ENCODE measurements at regions of chr12 and their contacts with region 1.

Region 1: DNA sequence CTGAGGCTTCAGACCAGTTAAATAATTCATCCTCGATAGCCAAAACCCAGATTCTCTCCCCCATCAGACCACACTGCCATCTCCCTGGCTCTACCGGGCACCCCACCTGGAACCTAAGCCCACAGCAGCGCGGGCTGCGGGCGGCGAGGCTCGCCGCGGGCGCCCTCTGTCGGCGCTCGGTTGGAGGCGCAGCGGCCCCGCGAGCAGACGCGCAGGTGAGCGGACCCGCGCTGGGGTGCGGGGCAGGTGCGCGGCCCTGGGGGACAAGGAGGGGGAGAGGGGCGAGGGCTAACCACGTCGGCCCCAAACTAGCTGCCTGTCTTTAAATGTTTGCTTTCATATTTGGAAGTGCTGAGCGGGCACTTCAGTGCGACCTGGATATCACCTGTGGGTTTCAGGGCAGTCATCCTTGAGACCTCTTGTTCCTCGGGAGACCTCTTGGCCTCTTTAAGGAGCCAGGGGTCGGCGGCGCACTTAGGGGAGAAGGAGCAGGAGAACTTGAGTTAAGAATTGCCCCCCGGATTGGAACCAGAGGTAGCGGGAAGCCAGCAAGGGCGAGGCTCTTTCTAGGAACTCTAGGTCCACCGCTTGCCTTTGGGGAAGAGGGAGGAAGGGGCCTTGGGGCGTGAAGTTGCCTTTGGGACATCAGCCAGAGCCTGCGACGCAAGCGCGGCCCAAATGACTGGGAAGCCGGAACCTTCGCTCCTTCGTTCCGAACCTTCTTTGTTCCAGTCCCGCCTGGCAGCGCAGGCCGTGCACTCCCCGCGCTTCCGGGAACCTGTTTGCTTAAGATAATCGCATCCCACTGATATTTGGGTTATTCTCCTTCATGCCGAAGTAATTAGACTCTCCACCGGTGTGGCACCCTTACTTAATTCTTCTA is 78.7 kb downstream of the NEDD1 start:
- DNase-seq: peak in 13 of 14 experiments; percentile 5 to 73 (median 36)
- ATAC-seq: peak; percentile 92
- H3K4me3 ChIP-seq: peak overlapping the region; percentile 60
- H3K4me3 Mint-ChIP-seq: peak overlapping the region; percentile 80
- H3K27ac ChIP-seq: no peak overlapping the region
- H3K27ac Mint-ChIP-seq: no peak overlapping the region
- H3K4me1 ChIP-seq: peaks cover 11% of the 10 kb centered on the region
- H3K4me1 Mint-ChIP-seq: peaks cover 9% of the 10 kb centered on the region
- H3K27me3 ChIP-seq: peaks cover 0 to 5% of the 10 kb centered on the region in 2 experiments
- H3K27me3 Mint-ChIP-seq: peaks cover 41% of the 10 kb centered on the region
- CTCF ChIP-seq: peak; percentile 88

Region 2: GRCh38 chr12:96585977-96586376 is 399.7 kb before region 1 on chr12:
- CTCF ChIA-PET with region 1: no interaction called
- POLR2A ChIA-PET with region 1: no interaction called
- intact Hi-C with region 1: loop called in 1 of 2 experiments (anchors 2 kb)
- DNase-seq: no peak
- ATAC-seq: no peak
- H3K4me3 ChIP-seq: no peak overlapping the region
- H3K4me3 Mint-ChIP-seq: no peak overlapping the region
- H3K27ac ChIP-seq: no peak overlapping the region
- H3K27ac Mint-ChIP-seq: no peak overlapping the region
- H3K4me1 ChIP-seq: no peaks in the 10 kb centered on the region
- H3K4me1 Mint-ChIP-seq: no peaks in the 10 kb centered on the region
- H3K27me3 ChIP-seq: no peaks in the 10 kb centered on the region
- H3K27me3 Mint-ChIP-seq: peaks cover 18% of the 10 kb centered on the region
- CTCF ChIP-seq: no peak

Region 3: GRCh38 chr12:96687719-96688118 is 298.0 kb before region 1 on chr12:
- CTCF ChIA-PET with region 1: no interaction called
- POLR2A ChIA-PET with region 1: no interaction called
- intact Hi-C with region 1: no loop called
- DNase-seq: no peak
- ATAC-seq: no peak
- H3K4me3 ChIP-seq: no peak overlapping the region
- H3K4me3 Mint-ChIP-seq: no peak overlapping the region
- H3K27ac ChIP-seq: no peak overlapping the region
- H3K27ac Mint-ChIP-seq: no peak overlapping the region
- H3K4me1 ChIP-seq: no peaks in the 10 kb centered on the region
- H3K4me1 Mint-ChIP-seq: no peaks in the 10 kb centered on the region
- H3K27me3 ChIP-seq: peaks cover 0 to 7% of the 10 kb centered on the region in 2 experiments
- H3K27me3 Mint-ChIP-seq: peaks cover 21% of the 10 kb centered on the region
- CTCF ChIP-seq: no peak

Region 4: GRCh38 chr12:97308576-97309198 is 323.0 kb after region 1 on chr12:
- CTCF ChIA-PET with region 1: no interaction called
- POLR2A ChIA-PET with region 1: no interaction called
- intact Hi-C with region 1: loop called (anchors 5 to 10 kb)
- DNase-seq: peak in 3 of 14 experiments; percentile 57 to 73 (median 73)
- ATAC-seq: peak; percentile 48
- H3K4me3 ChIP-seq: no peak overlapping the region
- H3K4me3 Mint-ChIP-seq: no peak overlapping the region
- H3K27ac ChIP-seq: no peak overlapping the region
- H3K27ac Mint-ChIP-seq: no peak overlapping the region
- H3K4me1 ChIP-seq: no peaks in the 10 kb centered on the region
- H3K4me1 Mint-ChIP-seq: no peaks in the 10 kb centered on the region
- H3K27me3 ChIP-seq: peaks cover 0 to 4% of the 10 kb centered on the region in 2 experiments
- H3K27me3 Mint-ChIP-seq: peaks cover 6% of the 10 kb centered on the region
- CTCF ChIP-seq: peak; percentile 93

Region 5: GRCh38 chr12:98397316-98398105 is 1411.8 kb after region 1 on chr12:
- CTCF ChIA-PET with region 1: no interaction called
- POLR2A ChIA-PET with region 1: no interaction called
- intact Hi-C with region 1: loop called (anchors 2 to 5 kb)
- DNase-seq: peak; percentile 67 to 89 (median 76)
- ATAC-seq: peak; percentile 96
- H3K4me3 ChIP-seq: peak overlapping the region; percentile 53
- H3K4me3 Mint-ChIP-seq: peak overlapping the region; percentile 75
- H3K27ac ChIP-seq: peak overlapping the region in 1 of 2 donors; percentile 37
- H3K27ac Mint-ChIP-seq: peak overlapping the region; percentile 16
- H3K4me1 ChIP-seq: peaks cover 23% of the 10 kb centered on the region
- H3K4me1 Mint-ChIP-seq: peaks cover 28% of the 10 kb centered on the region
- H3K27me3 ChIP-seq: no peaks in the 10 kb centered on the region
- H3K27me3 Mint-ChIP-seq: no peaks in the 10 kb centered on the region
- CTCF ChIP-seq: peak; percentile 82

Measured in CD4-positive, alpha-beta T cell (primary cell).